Activated B cell treated with CpG ODN at 0.5 μM for 24 hours (primary cell): ENCODE measurements at regions of chr10 and their contacts with region 1.

Region 1: DNA sequence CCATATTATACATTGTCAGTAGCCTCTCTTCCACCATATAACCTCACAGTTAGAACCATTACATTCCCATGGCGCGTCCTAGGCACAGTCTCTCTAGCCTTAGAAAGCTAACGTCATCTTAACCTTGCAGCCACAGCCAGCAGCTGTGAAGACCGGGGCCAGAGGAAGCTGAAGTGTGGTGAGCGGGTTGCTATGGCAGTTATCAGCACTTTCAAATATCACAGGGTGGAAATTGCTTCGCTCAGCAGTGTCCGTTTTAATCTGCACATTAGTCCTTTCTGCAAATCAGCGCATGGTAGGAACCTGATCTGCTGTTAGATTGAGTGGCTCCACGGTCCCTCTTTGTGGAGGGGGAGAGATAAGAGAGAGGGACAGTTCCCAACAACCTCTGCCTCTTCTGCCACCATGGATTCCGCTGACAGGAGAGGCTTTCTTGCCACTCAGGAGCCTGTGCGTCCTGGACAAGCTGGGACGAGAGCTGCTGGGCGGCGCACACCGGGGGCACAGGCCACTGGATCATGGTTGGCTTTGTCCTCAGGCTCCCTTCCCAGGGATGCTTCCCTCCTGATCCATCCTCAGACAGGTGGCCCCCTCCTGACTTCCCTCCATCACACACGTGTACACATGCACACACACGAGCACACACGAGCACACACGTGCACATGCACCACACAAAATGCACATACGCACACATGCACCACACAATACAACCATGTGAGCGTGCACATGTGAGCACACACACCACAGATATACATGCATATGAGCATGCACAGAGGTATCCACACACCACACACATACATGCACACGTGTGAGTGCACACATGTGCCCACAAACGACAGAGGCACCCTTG is 93.8 kb downstream of the WDR37 start:
- DNase-seq: no peak
- ATAC-seq: no peak
- H3K4me3 Mint-ChIP-seq: no peak overlapping the region
- H3K27ac Mint-ChIP-seq: no peak overlapping the region
- H3K4me1 Mint-ChIP-seq: no peaks in the 10 kb centered on the region
- H3K27me3 Mint-ChIP-seq: peaks cover 6% of the 10 kb centered on the region
- CTCF ChIP-seq: no peak

Region 2: DNA sequence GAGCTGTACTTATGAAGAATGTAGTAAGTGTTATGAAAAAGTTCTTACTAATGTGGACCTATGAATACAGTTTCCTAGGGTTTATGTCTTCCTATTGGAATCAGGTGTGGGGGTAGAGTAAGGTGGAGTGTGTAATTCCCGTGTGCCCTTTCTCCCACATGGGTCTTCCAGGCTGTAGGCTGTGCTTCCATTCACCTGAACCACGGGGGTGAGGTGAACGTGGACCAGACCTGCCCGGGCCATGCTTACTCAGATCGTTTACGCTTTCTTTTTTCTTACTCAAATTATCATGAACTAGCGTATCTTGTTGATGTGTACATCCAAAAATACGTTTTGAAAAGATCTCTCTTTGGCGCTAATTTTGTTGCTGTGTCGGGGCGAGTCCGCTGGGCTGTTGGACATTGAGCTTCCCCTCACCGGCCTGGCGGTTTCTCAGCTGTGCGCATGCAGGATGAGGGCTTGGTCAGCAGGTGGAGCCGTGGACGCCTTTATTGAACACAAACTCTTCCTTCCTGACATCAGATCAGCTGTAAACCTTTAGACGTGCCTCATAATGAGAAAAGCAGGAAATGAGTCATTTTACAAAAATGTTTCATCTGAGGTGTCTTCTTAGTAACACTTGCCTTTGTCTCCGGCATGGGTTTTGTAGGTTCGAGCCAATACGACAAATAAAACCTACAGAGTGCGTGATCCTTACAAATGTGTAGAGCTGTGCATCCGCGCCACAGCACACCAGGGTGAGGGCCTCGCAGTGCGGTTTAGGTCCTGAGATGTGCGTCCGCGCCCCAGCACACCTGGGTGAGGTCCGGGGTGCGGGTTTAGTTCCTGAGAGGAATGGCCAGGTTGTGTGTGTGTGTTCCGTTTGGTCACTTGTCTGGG is 40.0 kb before region 1 on chr10:
- CTCF ChIA-PET with region 1: no interaction called
- POLR2A ChIA-PET with region 1: no interaction called
- intact Hi-C with region 1: no loop called
- DNase-seq: no peak
- ATAC-seq: peak; percentile 97
- H3K4me3 Mint-ChIP-seq: no peak overlapping the region
- H3K27ac Mint-ChIP-seq: peak overlapping the region; percentile 77
- H3K4me1 Mint-ChIP-seq: peaks cover 10% of the 10 kb centered on the region
- H3K27me3 Mint-ChIP-seq: no peaks in the 10 kb centered on the region
- CTCF ChIP-seq: no peak

Region 3: GRCh38 chr10:1323951-1324350 is 173.9 kb after region 1 on chr10:
- CTCF ChIA-PET with region 1: no interaction called
- POLR2A ChIA-PET with region 1: no interaction called
- intact Hi-C with region 1: loop called (anchors 10 kb)
- DNase-seq: no peak
- ATAC-seq: no peak
- H3K4me3 Mint-ChIP-seq: no peak overlapping the region
- H3K27ac Mint-ChIP-seq: no peak overlapping the region
- H3K4me1 Mint-ChIP-seq: no peaks in the 10 kb centered on the region
- H3K27me3 Mint-ChIP-seq: peaks cover 11% of the 10 kb centered on the region
- CTCF ChIP-seq: no peak